ENCODE measurements at regions of chr17 and their contacts with region 1.

Region 1: GRCh38 chr17:51056813-51057510 is 63.7 kb downstream of the SPAG9 start:
- DNase-seq: peak; percentile 60
- H3K4me3 Mint-ChIP-seq: no peak overlapping the region
- H3K27ac Mint-ChIP-seq: peak overlapping the region; percentile 48
- H3K4me1 Mint-ChIP-seq: peaks cover 27% of the 10 kb centered on the region
- H3K27me3 Mint-ChIP-seq: no peaks in the 10 kb centered on the region
- CTCF ChIP-seq: peak; percentile 65

Region 2: GRCh38 chr17:51000835-51001638 is 55.9 kb before region 1 on chr17:
- CTCF ChIA-PET with region 1: interaction called, 15 read pairs
- intact Hi-C with region 1: loop called (anchors 1 kb)
- DNase-seq: peak; percentile 41
- H3K4me3 Mint-ChIP-seq: no peak overlapping the region
- H3K27ac Mint-ChIP-seq: no peak overlapping the region
- H3K4me1 Mint-ChIP-seq: no peaks in the 10 kb centered on the region
- H3K27me3 Mint-ChIP-seq: no peaks in the 10 kb centered on the region
- CTCF ChIP-seq: peak; percentile 48

Region 3: GRCh38 chr17:51006601-51007000 is 50.4 kb before region 1 on chr17:
- CTCF ChIA-PET with region 1: interaction called, 7 read pairs
- intact Hi-C with region 1: loop called (anchors 1 kb)
- DNase-seq: no peak
- H3K4me3 Mint-ChIP-seq: no peak overlapping the region
- H3K27ac Mint-ChIP-seq: no peak overlapping the region
- H3K4me1 Mint-ChIP-seq: no peaks in the 10 kb centered on the region
- H3K27me3 Mint-ChIP-seq: no peaks in the 10 kb centered on the region
- CTCF ChIP-seq: no peak

Region 4: DNA sequence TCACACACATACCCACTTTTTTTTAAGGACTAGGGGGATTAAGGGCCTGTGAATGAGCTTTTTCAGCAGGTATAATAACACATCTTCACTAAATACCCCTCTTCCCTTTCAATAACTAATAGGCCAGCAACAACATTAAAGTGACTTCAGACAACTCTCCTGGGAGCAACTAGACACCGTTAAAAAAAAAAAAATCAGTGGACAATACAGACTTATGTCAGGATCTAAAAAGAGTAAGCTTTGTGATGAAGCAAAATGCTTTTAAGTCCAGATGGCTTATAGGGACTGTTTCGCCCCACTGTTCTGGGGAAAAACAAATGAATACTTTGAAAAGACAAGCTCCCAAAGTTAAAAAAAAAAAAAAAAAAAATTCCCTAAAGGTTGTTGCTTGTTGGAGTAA is 34.7 kb after region 1 on chr17:
- CTCF ChIA-PET with region 1: no interaction called
- intact Hi-C with region 1: loop called (anchors 5 kb)
- DNase-seq: no peak
- H3K4me3 Mint-ChIP-seq: no peak overlapping the region
- H3K27ac Mint-ChIP-seq: no peak overlapping the region
- H3K4me1 Mint-ChIP-seq: peaks cover 30% of the 10 kb centered on the region
- H3K27me3 Mint-ChIP-seq: no peaks in the 10 kb centered on the region
- CTCF ChIP-seq: no peak

Region 5: GRCh38 chr17:51153210-51154072 is 96.5 kb after region 1 on chr17 and contains the start of gene NME1:
- CTCF ChIA-PET with region 1: interaction called, 15 read pairs
- intact Hi-C with region 1: loop called (anchors 10 kb)
- DNase-seq: peak; percentile 99
- H3K4me3 Mint-ChIP-seq: no peak within 1 kb of the TSS
- H3K27ac Mint-ChIP-seq: no peak within 1 kb of the TSS
- H3K4me1 Mint-ChIP-seq: no peaks in the 10 kb centered on the region
- H3K27me3 Mint-ChIP-seq: no peaks in the 10 kb centered on the region
- CTCF ChIP-seq: peak; percentile 89
- total RNA-seq, gene NME1: 351 and 365 TPM in 2 replicates

Region 6: DNA sequence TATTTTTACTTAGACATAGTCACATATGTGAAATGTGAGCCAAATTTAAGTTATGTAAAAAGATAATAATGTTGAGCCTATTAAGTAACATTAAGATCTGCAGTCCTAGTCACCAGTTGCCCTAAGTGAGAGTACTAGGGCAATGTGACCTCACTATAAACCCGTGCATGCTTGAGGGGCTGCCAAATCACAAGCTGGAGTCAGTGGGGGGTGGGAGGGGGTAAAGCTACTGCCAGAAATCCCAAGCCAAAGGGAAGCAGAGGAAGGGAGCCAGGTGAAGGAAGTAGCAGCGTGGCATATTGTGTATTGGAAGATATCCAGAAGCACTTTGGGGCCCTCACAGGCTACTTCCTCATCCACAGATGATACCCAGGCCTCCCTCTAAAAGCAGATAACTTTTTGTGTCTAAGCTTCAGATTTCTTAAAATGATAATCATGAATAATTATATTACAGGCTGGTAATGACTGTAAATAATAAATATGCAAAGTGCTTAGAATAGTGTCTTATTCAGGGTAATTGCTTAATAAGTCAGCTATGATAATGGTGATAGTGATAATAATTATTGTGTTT is 967.4 kb after region 1 on chr17:
- CTCF ChIA-PET with region 1: no interaction called
- intact Hi-C with region 1: no loop called
- DNase-seq: no peak
- H3K4me3 Mint-ChIP-seq: no peak overlapping the region
- H3K27ac Mint-ChIP-seq: no peak overlapping the region
- H3K4me1 Mint-ChIP-seq: peaks cover 24% of the 10 kb centered on the region
- H3K27me3 Mint-ChIP-seq: peaks cover 9% of the 10 kb centered on the region
- CTCF ChIP-seq: no peak

Measured in Calu3 (cell line).